ENCODE measurements at regions of chr10 and their contacts with region 1.

Region 1: GRCh38 chr10:9209105-9209798 is 1154.8 kb downstream of the GATA3 start:
- DNase-seq: peak; percentile 71
- H3K4me3 Mint-ChIP-seq: no peak overlapping the region
- H3K27ac Mint-ChIP-seq: no peak overlapping the region
- H3K4me1 Mint-ChIP-seq: peaks cover 8% of the 10 kb centered on the region
- H3K27me3 Mint-ChIP-seq: no peaks in the 10 kb centered on the region
- CTCF ChIP-seq: peak; percentile 70

Region 2: GRCh38 chr10:8873310-8873709 is 335.9 kb before region 1 on chr10:
- CTCF ChIA-PET with region 1: no interaction called
- intact Hi-C with region 1: loop called (anchors 5 kb)
- DNase-seq: no peak
- H3K4me3 Mint-ChIP-seq: no peak overlapping the region
- H3K27ac Mint-ChIP-seq: peak overlapping the region; percentile 21
- H3K4me1 Mint-ChIP-seq: peaks cover 11% of the 10 kb centered on the region
- H3K27me3 Mint-ChIP-seq: no peaks in the 10 kb centered on the region
- CTCF ChIP-seq: no peak

Region 3: DNA sequence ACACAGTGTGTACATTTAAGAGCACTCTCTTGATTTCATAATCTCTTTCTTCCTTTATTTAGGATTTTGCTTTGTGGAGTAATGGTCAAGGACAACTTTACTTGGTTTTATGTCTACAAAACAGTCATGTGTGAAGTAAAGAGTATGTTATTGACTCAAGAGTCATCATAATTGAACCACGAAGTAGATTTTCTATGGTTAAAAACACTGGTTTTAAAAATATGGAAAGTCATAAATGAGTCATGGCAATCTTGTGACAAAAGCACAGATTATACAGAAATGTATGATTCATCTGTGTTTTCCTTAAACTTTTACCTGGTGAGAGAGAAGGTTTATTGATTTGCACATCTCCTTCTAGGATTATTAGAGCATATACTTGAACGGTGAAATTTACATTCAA is 185.0 kb before region 1 on chr10:
- CTCF ChIA-PET with region 1: no interaction called
- intact Hi-C with region 1: loop called (anchors 5 kb)
- DNase-seq: no peak
- H3K4me3 Mint-ChIP-seq: no peak overlapping the region
- H3K27ac Mint-ChIP-seq: peak overlapping the region; percentile 73
- H3K4me1 Mint-ChIP-seq: no peaks in the 10 kb centered on the region
- H3K27me3 Mint-ChIP-seq: no peaks in the 10 kb centered on the region
- CTCF ChIP-seq: no peak